H1 (cell line): ENCODE measurements at regions of chr2 and their contacts with region 1.

Region 1: DNA sequence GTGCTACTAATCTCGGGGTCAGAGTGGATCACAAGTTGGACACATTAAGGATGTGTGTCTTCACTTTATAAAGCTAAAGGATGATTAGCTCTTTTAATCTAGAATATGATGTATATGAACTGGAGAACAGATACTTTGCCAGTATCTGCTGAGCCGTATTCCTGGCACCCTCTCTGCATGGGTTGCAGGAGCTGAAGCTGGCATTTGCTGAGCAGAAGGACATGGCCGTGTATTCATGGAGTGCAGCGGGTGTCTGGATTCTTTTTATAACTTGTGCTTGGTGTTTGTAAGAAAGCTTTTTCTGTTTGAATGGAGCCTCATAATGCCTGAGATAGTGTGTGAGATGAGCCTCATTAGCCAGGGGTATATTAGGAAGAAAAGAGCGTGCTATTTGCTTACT is 103.9 kb upstream of the MCFD2 start:
- DNase-seq: no peak
- H3K4me3 ChIP-seq: no peak overlapping the region
- H3K27ac ChIP-seq: no peak overlapping the region
- H3K4me1 ChIP-seq: no peaks in the 10 kb centered on the region
- H3K27me3 ChIP-seq: no peaks in the 10 kb centered on the region
- CTCF ChIP-seq: no peak
- EP300 ChIP-seq: no peak
- POLR2A ChIP-seq: no peak
- RAD21 ChIP-seq: no peak

Region 2: DNA sequence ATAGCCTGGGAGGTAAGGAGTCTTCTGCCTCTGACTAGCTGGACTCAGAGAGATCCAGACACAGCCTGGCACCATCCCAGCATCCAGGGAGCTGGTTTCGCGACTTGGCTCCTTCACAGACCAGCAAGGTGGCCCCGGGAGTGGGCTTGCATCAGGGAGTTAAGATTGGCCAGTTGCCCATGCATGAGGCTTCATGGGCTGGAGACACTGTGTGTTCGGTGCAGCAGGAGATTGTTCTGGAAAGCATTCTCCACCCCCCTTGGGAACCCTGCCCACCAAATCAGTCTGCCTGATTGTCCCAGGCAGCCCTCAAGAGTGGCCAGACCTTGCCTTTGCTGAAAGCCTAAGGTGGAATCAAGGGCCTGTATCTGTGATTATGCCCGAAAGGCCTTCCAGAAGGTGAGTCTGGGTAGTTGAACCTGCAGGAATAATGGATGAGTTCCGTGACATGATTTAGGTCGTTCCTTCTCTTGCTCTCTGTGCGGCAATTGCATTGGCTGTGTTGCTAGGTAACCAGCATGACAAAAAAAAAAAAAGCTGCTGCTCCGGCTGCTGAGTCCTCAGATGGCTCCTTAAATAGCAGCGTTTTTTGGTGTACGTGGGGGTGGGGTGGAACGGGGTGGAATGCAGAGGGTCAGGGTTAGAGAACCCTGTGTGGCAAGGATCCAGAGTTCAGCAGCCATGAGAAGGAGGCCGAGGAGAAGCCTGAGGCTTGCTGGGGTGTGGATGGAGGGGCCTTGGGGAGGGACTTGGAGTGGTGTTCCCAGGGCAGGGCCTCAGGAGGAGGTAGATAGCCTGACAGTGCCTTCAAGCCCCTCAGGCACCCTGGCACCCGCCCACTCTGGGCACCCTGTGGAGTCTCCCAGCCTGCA is 10.9 kb before region 1 on chr2:
- CTCF ChIA-PET with region 1: interaction called, 15 read pairs
- POLR2A ChIA-PET with region 1: interaction called, 3 read pairs
- DNase-seq: no peak
- H3K4me3 ChIP-seq: no peak overlapping the region
- H3K27ac ChIP-seq: peak overlapping the region; percentile 64
- H3K4me1 ChIP-seq: peaks cover 0 to 7% (median 3%) of the 10 kb centered on the region in 4 experiments; a peak in 5 of 7 replicates
- H3K27me3 ChIP-seq: no peaks in the 10 kb centered on the region
- CTCF ChIP-seq: no peak
- EP300 ChIP-seq: no peak
- POLR2A ChIP-seq: no peak
- RAD21 ChIP-seq: no peak; a peak in 1 of 4 replicates

Region 3: GRCh38 chr2:47029737-47030524 is 10.4 kb after region 1 on chr2:
- CTCF ChIA-PET with region 1: interaction called, 25 read pairs
- POLR2A ChIA-PET with region 1: interaction called, 3 read pairs
- DNase-seq: no peak
- H3K4me3 ChIP-seq: no peak overlapping the region
- H3K27ac ChIP-seq: no peak overlapping the region
- H3K4me1 ChIP-seq: peaks cover 5 to 15% (median 9%) of the 10 kb centered on the region in 4 experiments
- H3K27me3 ChIP-seq: no peaks in the 10 kb centered on the region
- CTCF ChIP-seq: no peak
- EP300 ChIP-seq: no peak
- POLR2A ChIP-seq: no peak
- RAD21 ChIP-seq: no peak